T-cell (primary cell): ENCODE measurements at regions of chr3 and their contacts with region 1.

Region 1: DNA sequence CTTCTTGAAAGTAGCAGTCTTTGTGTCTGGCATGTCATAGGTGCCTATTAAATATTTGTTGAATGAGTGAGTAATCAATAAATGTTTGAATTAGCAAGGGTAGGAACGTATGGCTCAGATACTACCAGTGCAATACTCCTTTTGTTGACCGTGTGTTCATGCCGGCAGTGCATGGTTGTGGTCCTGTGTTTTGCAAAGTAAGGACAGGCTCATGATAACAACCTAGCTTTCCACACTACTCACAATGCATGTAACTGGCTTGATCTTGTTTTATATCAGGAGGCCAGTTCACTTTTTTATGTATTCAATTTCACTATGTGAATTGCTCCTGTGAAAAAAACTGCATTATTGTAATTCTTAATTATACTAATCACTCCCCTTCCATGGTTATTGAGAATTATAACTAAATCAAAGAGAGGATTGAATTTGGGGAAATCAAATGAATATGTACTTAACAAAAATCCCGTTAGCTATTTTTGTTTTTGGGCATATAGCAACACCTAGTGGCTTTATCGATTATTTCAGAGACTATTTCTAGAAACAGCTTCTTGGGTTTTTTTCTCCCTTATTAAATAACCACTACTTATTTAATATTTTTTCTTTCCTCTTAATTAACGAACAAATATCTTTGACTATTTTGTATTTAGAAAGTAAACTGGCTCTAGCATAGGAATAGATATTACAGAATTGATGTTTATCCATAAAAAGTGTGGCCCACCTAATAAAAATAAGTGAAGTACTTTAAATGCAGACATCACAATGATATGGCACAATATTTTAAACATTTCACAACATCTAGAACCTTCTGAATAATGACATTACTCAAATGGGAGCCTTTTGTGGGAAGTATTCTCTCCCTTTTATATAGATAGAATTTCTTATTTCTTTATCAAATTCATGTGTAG is 218.5 kb downstream of the BBX start:
- DNase-seq: peak in 1 of 35 experiments; percentile 40
- ATAC-seq: no peak
- H3K4me3 ChIP-seq: no peak overlapping the region
- H3K4me3 Mint-ChIP-seq: no peak overlapping the region
- H3K27ac ChIP-seq: no peak overlapping the region
- H3K27ac Mint-ChIP-seq: no peak overlapping the region
- H3K4me1 ChIP-seq: no peaks in the 10 kb centered on the region
- H3K4me1 Mint-ChIP-seq: peaks cover 3 to 6% (median 3%) of the 10 kb centered on the region in 3 donors
- H3K27me3 ChIP-seq: no peaks in the 10 kb centered on the region
- H3K27me3 Mint-ChIP-seq: no peaks in the 10 kb centered on the region

Region 2: DNA sequence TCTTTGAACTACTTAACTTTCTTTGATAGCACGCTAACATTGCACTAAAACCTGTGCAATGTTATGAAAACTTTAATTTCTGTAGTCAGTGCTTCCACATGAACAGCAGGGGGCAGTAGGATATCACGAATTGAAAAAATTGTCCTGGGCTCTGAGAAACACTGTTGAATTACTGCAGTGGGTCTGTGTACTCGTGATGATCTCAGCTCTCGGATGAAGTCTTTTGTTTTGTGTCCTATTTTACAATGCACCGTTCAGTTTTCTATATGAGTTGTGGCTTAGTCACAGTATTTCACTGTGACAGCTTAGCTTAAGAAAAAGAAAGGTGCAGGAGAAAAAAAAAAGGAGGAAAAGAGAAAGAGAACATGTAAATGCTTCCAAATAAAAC is 505.3 kb before region 1 on chr3:
- CTCF ChIA-PET with region 1: interaction called, 12 read pairs
- POLR2A ChIA-PET with region 1: no interaction called
- DNase-seq: peak in 31 of 35 experiments; percentile 2 to 82 (median 32)
- ATAC-seq: peak; percentile 61 to 72 (median 66)
- H3K4me3 ChIP-seq: peak overlapping the region in 1 of 2 donors; percentile 7
- H3K4me3 Mint-ChIP-seq: peak overlapping the region; percentile 52 to 67 (median 59)
- H3K27ac ChIP-seq: no peak overlapping the region
- H3K27ac Mint-ChIP-seq: peak overlapping the region in 1 of 2 donors; percentile 11
- H3K4me1 ChIP-seq: peaks cover 6 to 8% of the 10 kb centered on the region in 2 experiments
- H3K4me1 Mint-ChIP-seq: peaks cover 11 to 13% (median 13%) of the 10 kb centered on the region in 3 donors
- H3K27me3 ChIP-seq: peaks cover 0 to 4% of the 10 kb centered on the region in 2 experiments
- H3K27me3 Mint-ChIP-seq: peaks cover 4 to 8% of the 10 kb centered on the region in 2 donors

Region 3: GRCh38 chr3:107421170-107421792 is 320.0 kb before region 1 on chr3:
- CTCF ChIA-PET with region 1: no interaction called
- POLR2A ChIA-PET with region 1: interaction called in 1 of 2 experiments, 15 read pairs
- DNase-seq: peak in 6 of 35 experiments; percentile 3 to 67 (median 6)
- ATAC-seq: peak; percentile 45 to 81 (median 75)
- H3K4me3 ChIP-seq: no peak overlapping the region
- H3K4me3 Mint-ChIP-seq: no peak overlapping the region
- H3K27ac ChIP-seq: no peak overlapping the region
- H3K27ac Mint-ChIP-seq: no peak overlapping the region
- H3K4me1 ChIP-seq: no peaks in the 10 kb centered on the region
- H3K4me1 Mint-ChIP-seq: peaks cover 3 to 6% (median 3%) of the 10 kb centered on the region in 3 donors
- H3K27me3 ChIP-seq: no peaks in the 10 kb centered on the region
- H3K27me3 Mint-ChIP-seq: peaks cover 6 to 16% of the 10 kb centered on the region in 2 donors

Region 4: DNA sequence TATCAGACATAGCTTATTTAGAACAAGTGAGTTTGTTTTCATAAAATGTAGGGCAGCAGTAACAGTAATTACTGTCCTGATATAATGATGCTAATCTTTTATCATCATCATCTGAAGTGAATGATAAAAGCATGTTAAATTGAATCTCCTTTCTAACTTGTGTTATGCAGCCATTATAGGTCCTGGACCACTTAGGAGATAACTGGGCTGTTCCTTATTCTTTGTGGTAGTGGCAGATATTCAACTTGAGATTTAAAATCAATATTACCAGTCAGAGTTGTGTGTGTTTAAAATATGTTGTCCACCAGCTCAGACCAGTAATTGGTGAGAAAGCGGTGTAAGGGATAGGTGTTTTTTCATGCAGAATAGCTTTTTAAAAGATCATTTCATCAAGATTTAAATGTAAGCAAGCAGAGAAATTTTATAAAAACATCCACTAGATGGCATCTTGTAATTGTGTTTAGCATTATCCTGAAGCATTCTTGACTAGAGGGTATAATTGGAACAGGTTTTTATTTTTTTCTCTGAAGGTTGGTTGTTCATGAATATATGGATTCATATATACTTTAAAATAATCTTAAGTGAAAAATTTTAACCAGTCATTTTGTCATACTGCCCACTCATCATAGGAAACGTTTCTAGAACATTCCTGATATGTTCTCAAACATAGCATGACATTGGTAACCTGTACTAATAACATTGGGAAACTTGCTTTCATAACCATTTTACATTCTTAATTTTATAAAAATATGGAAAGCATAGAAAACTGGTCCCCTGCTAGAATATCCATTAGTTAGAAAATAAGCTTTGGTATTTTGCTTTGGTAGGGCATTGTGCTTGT is 64.6 kb before region 1 on chr3:
- CTCF ChIA-PET with region 1: interaction called, 24 to 95 read pairs
- POLR2A ChIA-PET with region 1: no interaction called
- DNase-seq: peak in 1 of 35 experiments; percentile 42
- ATAC-seq: peak in 2 of 4 experiments; percentile 50 to 54
- H3K4me3 ChIP-seq: no peak overlapping the region
- H3K4me3 Mint-ChIP-seq: no peak overlapping the region
- H3K27ac ChIP-seq: no peak overlapping the region
- H3K27ac Mint-ChIP-seq: peak overlapping the region in 1 of 2 donors; percentile 3
- H3K4me1 ChIP-seq: peaks cover 0 to 6% of the 10 kb centered on the region in 2 experiments
- H3K4me1 Mint-ChIP-seq: peaks cover 41 to 42% (median 41%) of the 10 kb centered on the region in 3 donors
- H3K27me3 ChIP-seq: no peaks in the 10 kb centered on the region
- H3K27me3 Mint-ChIP-seq: no peaks in the 10 kb centered on the region

Region 5: DNA sequence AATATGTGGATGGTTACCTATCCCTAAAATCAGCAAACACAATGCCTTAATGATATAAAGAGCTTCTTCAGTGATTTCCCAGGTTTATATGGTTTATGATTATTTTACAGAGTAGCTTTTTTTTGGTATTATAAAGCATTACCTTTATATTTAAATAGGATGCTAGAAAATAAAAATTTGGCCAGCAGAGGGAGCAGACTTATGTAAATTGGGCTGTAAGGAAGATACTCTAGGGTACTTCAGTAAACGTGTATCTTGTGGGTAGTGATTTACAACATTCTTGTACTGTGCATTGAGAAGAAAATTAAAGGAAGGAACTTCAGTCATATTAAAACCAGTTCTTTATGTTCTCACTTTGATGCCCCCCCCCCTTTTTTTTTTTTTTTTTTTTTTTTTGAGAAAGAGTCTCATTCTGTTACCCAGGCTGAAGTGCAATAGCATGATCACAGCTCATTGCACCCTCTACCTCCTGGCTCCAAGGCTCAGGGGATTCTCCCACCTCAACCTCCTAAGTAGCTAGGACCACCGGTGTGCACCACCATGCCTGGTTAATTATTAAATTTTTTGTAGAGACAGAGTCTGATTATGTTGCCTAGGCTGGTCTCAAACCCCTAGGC is 50.6 kb before region 1 on chr3:
- CTCF ChIA-PET with region 1: interaction called in 1 of 2 experiments, 6 read pairs
- POLR2A ChIA-PET with region 1: interaction called, 4 to 12 read pairs
- DNase-seq: peak in 2 of 35 experiments; percentile 6 to 71
- ATAC-seq: peak; percentile 43 to 74 (median 54)
- H3K4me3 ChIP-seq: no peak overlapping the region
- H3K4me3 Mint-ChIP-seq: no peak overlapping the region
- H3K27ac ChIP-seq: no peak overlapping the region
- H3K27ac Mint-ChIP-seq: no peak overlapping the region
- H3K4me1 ChIP-seq: peaks cover 0 to 4% of the 10 kb centered on the region in 2 experiments
- H3K4me1 Mint-ChIP-seq: peaks cover 28 to 39% (median 34%) of the 10 kb centered on the region in 3 donors
- H3K27me3 ChIP-seq: no peaks in the 10 kb centered on the region
- H3K27me3 Mint-ChIP-seq: no peaks in the 10 kb centered on the region

Region 6: DNA sequence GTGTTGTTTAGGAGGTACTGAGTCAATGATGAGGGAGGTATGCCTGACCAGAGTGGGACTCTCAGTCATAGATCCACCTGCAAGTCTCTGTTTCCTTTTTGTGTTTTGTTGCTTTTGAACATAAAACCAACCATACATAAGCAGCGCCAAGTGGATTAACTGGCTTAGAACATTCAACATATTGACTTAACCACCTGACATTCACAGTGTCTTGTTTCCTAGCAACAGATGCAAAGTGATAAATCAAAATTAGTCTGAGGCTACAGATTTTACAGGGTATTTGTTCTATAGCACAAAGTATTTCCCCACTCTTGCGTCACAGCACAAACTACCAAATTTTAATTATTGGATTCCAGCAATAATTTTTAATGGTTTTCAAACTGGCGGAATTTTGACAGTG is 65.3 kb after region 1 on chr3:
- CTCF ChIA-PET with region 1: no interaction called
- POLR2A ChIA-PET with region 1: no interaction called
- DNase-seq: no peak
- ATAC-seq: no peak
- H3K4me3 ChIP-seq: no peak overlapping the region
- H3K4me3 Mint-ChIP-seq: no peak overlapping the region
- H3K27ac ChIP-seq: no peak overlapping the region
- H3K27ac Mint-ChIP-seq: no peak overlapping the region
- H3K4me1 ChIP-seq: no peaks in the 10 kb centered on the region
- H3K4me1 Mint-ChIP-seq: peaks cover 0 to 15% (median 12%) of the 10 kb centered on the region in 3 donors
- H3K27me3 ChIP-seq: no peaks in the 10 kb centered on the region
- H3K27me3 Mint-ChIP-seq: no peaks in the 10 kb centered on the region